ENCODE measurements at regions of chr6 and their contacts with region 1.

Region 1: DNA sequence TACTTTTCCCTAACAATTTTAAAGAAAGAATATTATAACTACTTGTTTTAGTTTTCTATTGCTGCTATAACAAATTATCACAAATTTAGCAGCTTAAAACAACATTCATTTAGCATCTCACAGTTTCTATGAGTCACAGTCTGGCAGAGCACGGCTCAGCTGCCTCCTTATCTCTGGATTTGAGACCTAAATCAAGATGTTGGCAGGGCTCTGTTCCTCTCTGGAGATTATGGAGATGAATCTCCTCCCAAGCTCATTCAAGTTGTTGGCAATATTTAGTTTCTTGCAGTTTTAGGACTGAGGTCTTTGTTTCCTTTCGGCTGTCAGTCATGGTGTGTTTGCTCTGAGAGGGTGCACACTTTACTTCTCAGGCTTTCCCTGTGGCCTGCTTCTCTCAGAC is 1065.8 kb upstream of the EYS start:
- DNase-seq: peak in 1 of 2 donors; percentile 26
- ATAC-seq: peak in 3 of 8 donors; percentile 47 to 61 (median 49)
- H3K4me3 ChIP-seq: no peak overlapping the region
- H3K27ac ChIP-seq: no peak overlapping the region
- H3K4me1 ChIP-seq: no peaks in the 10 kb centered on the region
- H3K27me3 ChIP-seq: no peaks in the 10 kb centered on the region
- CTCF ChIP-seq: no peak

Region 2: DNA sequence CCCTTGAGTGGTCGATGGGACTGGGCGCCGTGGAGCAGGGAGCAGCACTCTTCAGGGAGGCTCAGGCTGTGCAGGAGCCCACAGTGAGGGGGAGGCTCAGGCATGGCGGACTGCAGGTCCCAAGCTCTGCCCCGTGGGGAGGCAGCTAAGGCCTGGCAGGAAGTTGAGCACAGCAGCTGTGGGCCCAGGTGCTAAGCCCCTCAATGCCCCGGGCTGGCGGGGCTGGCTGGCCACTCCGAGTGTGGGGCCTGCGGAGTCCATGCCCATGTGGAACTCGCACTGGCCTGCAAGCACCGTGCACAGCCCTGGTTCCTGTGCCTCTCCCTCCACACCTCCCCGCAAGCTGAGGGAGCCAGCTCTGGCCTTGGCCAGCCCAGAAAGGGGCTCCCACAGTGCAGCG is 117.4 kb before region 1 on chr6:
- intact Hi-C with region 1: loop called in 1 of 10 experiments (anchors 10 kb)
- DNase-seq: no peak
- ATAC-seq: no peak
- H3K4me3 ChIP-seq: no peak overlapping the region
- H3K27ac ChIP-seq: no peak overlapping the region
- H3K4me1 ChIP-seq: no peaks in the 10 kb centered on the region
- H3K27me3 ChIP-seq: no peaks in the 10 kb centered on the region
- CTCF ChIP-seq: no peak

Region 3: DNA sequence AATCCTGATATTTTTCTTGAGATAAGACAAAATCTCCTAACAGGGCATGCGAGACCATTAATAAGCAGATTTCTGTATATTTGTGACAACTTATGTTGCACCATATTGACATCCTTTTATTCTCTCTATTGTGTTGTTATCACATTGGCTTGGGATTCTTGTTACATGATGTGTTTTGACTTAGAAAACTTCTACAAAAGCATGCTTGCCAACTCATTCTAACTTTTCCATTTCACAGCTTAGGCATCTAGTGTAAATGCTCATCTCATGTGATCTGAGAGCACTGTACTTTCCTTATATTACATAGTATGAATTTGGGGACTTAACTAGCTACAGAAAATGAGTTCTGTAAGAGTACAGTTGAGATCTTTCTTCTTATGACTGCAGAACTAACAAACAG is 821.6 kb after region 1 on chr6:
- intact Hi-C with region 1: loop called in 1 of 10 experiments (anchors 10 kb)
- DNase-seq: no peak
- ATAC-seq: no peak
- H3K4me3 ChIP-seq: no peak overlapping the region
- H3K27ac ChIP-seq: no peak overlapping the region
- H3K4me1 ChIP-seq: no peaks in the 10 kb centered on the region
- H3K27me3 ChIP-seq: no peaks in the 10 kb centered on the region
- CTCF ChIP-seq: no peak